Right ventricle myocardium superior (tissue), 1 donor: ENCODE measurements at regions of chr3 and their contacts with region 1.

Region 1: GRCh38 chr3:58013973-58014649 is 5.9 kb downstream of the FLNB start:
- DNase-seq: peak; percentile 65
- ATAC-seq: peak; percentile 69

Region 2: DNA sequence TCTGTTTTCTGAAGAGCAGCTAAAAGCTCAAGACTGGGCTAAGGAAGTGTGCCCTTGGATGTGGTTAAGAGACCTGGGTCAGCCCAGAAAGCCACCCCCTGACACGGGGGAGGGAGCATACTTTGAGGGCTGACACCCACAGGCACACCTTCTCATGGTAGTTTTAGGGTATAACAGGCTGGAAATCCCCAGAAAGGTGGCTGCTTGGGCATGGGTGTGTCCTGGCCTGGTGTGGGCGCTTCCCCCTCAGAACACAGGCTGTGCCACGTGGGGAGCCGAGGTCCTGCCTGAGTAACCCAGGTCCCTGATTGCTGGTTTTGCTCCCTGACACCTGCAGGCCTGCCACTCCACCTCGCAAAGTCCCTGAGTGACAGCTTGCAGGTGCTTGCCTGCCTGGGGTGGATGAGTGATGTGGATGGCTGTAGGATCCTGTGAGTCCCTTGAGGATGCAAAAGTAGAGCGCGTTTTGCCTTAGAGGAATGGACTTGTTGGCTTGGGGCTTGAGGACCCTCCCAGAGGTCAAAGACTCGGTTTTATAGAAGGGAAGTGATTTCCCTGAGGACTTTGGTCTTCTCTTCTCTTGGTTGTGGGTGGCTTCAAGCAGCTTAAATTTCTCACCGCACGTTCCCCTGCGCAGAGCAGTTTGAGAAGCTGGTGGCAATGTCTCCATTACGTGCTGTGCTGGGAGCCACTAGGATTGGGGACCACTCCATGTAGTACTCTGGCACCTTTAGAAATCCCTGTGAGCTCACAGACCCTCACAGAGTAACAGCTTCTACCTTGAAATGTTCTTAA is 102.2 kb after region 1 on chr3:
- intact Hi-C with region 1: loop called (anchors 10 kb)
- DNase-seq: no peak
- ATAC-seq: no peak

Region 3: DNA sequence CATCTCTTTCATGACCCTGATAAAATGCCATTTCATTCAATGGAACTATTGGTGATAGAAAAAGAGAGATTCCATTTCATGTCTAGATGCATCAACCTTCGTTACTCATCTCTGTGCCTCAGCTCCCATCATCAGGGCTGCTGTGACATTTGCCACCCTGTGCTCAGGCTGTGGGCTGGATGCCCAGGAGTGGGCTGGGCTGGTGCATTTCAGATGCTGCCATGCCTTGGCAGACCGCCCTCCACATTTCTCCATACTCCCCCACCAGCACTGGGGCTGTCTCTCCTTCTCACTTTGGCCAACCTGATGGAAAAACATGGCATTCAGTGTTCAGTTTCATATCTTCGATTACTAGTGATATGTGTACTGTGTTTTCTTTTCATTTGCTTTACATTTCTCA is 137.5 kb after region 1 on chr3:
- intact Hi-C with region 1: no loop called
- DNase-seq: peak; percentile 86
- ATAC-seq: peak; percentile 94